Aorta (tissue), 5 donors: ENCODE measurements at regions of chr17 and their contacts with region 1.

Region 1: DNA sequence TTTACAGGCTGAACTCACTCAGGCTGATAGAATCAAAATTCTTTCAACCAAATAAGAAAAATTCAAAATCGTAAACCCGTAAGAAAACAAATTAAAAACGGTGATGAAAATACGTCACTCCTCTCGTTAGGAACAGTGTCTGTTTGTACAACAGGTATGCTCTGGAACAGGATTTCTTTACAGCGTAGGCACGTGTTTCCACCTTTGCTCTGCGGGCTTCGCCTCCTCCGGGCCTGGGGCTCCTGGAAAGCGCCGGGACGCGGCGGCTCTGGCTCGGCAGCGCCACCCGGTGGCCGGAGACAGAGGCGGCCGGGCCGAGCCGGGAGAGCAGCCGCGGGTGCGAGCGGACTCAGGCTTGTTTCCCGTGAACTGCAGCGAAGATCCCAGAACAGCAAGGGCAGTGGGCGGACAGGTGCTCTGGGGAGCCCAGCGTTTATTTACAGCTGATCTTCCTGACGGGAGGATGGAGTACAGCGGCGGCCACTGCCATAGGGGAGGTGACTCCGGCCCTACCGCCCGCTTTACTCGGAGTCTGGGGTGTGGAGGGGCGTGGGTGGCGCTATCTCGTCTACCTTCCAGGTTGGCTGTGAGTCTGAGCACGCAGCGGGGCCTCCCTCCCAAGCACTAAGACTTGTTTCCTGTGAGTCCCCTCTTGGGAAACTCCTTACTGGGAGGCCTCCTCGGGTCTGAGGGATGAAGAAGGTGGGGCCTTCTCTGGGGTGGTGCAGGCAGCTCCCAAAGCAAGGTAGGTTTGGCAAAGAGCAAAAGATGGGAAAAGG is 40.5 kb upstream of the ATP2A3 start:
- DNase-seq: peak; percentile 62 to 87
- ATAC-seq: peak; percentile 75
- H3K4me3 ChIP-seq: no peak overlapping the region
- H3K27ac ChIP-seq: no peak overlapping the region
- H3K4me1 ChIP-seq: no peaks in the 10 kb centered on the region
- H3K27me3 ChIP-seq: no peaks in the 10 kb centered on the region

Region 2: GRCh38 chr17:3738562-3739295 is 266.0 kb before region 1 on chr17:
- intact Hi-C with region 1: loop called in 1 of 2 experiments (anchors 5 kb)
- DNase-seq: no peak
- ATAC-seq: no peak
- H3K4me3 ChIP-seq: no peak overlapping the region
- H3K27ac ChIP-seq: no peak overlapping the region
- H3K4me1 ChIP-seq: no peaks in the 10 kb centered on the region
- H3K27me3 ChIP-seq: no peaks in the 10 kb centered on the region

Region 3: DNA sequence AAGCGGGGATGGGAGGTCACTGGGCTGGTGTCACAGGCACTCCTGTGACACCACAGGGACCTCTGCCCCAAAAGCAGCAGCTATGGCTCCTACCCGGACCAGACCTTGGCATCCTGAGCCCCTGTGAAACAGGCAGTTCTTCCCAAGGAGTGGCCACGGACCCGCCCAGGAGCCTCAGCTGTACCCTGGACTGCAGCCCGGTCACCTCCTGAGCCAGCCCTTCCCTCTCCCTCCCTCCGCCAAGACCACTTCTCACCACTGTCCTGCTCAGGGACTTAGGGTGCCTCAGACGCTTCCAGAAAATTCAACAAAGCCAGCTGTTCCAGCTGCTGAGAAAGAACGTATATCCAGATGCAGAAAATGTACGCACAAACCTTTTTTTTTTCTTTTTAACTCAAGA is 144.8 kb before region 1 on chr17:
- intact Hi-C with region 1: loop called (anchors 5 to 10 kb)
- DNase-seq: peak in 1 of 2 donors; percentile 23
- ATAC-seq: no peak
- H3K4me3 ChIP-seq: no peak overlapping the region
- H3K27ac ChIP-seq: no peak overlapping the region
- H3K4me1 ChIP-seq: no peaks in the 10 kb centered on the region
- H3K27me3 ChIP-seq: no peaks in the 10 kb centered on the region

Region 4: GRCh38 chr17:3865176-3865575 is 139.5 kb before region 1 on chr17:
- intact Hi-C with region 1: loop called (anchors 5 to 10 kb)
- DNase-seq: peak; percentile 76 to 87
- ATAC-seq: peak; percentile 44
- H3K4me3 ChIP-seq: no peak overlapping the region
- H3K27ac ChIP-seq: no peak overlapping the region
- H3K4me1 ChIP-seq: no peaks in the 10 kb centered on the region
- H3K27me3 ChIP-seq: no peaks in the 10 kb centered on the region

Region 5: DNA sequence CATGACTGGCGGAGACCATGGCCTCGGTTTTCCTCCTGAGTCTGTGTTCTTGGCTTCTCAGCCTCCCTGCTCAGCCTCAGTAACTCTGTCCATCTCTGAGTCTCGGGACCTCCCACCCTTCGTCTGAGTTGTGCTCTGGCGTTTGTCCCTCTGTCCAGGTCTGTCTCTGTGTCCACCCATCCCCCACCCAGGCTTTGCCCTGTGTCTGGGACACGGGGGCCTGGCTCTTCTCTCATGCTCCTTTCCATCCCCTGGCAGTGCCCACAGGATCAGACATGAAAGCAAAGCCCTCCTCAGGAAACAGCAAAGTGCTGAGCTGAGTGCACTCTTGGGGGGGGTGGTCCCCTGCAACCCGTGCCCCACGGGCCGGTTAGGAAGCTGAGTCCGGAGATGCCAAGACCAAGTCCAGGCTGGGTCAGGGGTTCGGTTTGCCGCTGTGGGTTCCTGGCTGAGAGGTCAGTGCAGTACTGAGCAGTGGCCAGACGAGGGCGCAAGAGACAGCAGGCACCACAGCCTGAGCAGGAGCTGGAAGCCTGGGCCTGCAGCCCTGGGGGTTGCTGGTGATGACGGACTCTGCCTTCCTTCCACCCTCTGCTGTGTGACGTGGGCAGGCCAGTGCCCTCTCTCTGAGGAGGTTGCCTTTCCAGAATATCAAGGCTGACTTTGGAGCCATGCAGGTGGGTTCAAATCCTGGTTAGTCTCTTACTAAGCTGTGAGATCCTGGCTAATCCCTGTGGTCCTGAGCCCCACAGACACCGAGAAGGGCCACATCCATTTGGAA is 91.0 kb before region 1 on chr17:
- intact Hi-C with region 1: loop called (anchors 2 kb)
- DNase-seq: peak; percentile 90 to 95
- ATAC-seq: peak; percentile 88
- H3K4me3 ChIP-seq: no peak overlapping the region
- H3K27ac ChIP-seq: no peak overlapping the region
- H3K4me1 ChIP-seq: no peaks in the 10 kb centered on the region
- H3K27me3 ChIP-seq: no peaks in the 10 kb centered on the region

Region 6: GRCh38 chr17:3935140-3935542 is 69.6 kb before region 1 on chr17:
- intact Hi-C with region 1: no loop called
- DNase-seq: peak in 1 of 2 donors; percentile 75
- ATAC-seq: peak; percentile 68
- H3K4me3 ChIP-seq: no peak overlapping the region
- H3K27ac ChIP-seq: no peak overlapping the region
- H3K4me1 ChIP-seq: no peaks in the 10 kb centered on the region
- H3K27me3 ChIP-seq: no peaks in the 10 kb centered on the region

Region 7: GRCh38 chr17:3964203-3965117 is 40.2 kb before region 1 on chr17 and contains the start of gene ATP2A3:
- intact Hi-C with region 1: loop called in 1 of 2 experiments (anchors 2 kb)
- DNase-seq: peak in 1 of 2 donors; percentile 85
- ATAC-seq: peak; percentile 76
- H3K4me3 ChIP-seq: peak within 1 kb of the TSS; percentile 60 to 75
- H3K27ac ChIP-seq: peak within 1 kb of the TSS; percentile 2 to 48
- H3K4me1 ChIP-seq: no peaks in the 10 kb centered on the region
- H3K27me3 ChIP-seq: no peaks in the 10 kb centered on the region
- total RNA-seq, gene ATP2A3: 28.7 to 32.1 TPM